Mammary epithelial cell (primary cell): ENCODE measurements at regions of chr19 and their contacts with region 1.

Region 1: GRCh38 chr19:13022859-13023636 is 27.8 kb downstream of the NFIX start:
- DNase-seq: peak; percentile 95
- H3K4me3 ChIP-seq: peak overlapping the region; percentile 57 to 65 (median 64)
- H3K27ac ChIP-seq: peak overlapping the region; percentile 90
- H3K4me1 ChIP-seq: peaks cover 74% of the 10 kb centered on the region
- H3K27me3 ChIP-seq: no peaks in the 10 kb centered on the region
- CTCF ChIP-seq: no peak

Region 2: GRCh38 chr19:12945479-12946091 is 77.5 kb before region 1 on chr19 and contains the start of gene RAD23A:
- CTCF ChIA-PET with region 1: no interaction called
- dilution Hi-C with region 1: no loop called
- in situ Hi-C with region 1: no loop called
- intact Hi-C with region 1: no loop called
- DNase-seq: peak; percentile 96
- H3K4me3 ChIP-seq: peak within 1 kb of the TSS; percentile 67 to 89 (median 85)
- H3K27ac ChIP-seq: peak within 1 kb of the TSS; percentile 90
- H3K4me1 ChIP-seq: peaks cover 27% of the 10 kb centered on the region
- H3K27me3 ChIP-seq: no peaks in the 10 kb centered on the region
- CTCF ChIP-seq: no peak
- total RNA-seq, gene RAD23A: 101 to 123 TPM

Region 3: DNA sequence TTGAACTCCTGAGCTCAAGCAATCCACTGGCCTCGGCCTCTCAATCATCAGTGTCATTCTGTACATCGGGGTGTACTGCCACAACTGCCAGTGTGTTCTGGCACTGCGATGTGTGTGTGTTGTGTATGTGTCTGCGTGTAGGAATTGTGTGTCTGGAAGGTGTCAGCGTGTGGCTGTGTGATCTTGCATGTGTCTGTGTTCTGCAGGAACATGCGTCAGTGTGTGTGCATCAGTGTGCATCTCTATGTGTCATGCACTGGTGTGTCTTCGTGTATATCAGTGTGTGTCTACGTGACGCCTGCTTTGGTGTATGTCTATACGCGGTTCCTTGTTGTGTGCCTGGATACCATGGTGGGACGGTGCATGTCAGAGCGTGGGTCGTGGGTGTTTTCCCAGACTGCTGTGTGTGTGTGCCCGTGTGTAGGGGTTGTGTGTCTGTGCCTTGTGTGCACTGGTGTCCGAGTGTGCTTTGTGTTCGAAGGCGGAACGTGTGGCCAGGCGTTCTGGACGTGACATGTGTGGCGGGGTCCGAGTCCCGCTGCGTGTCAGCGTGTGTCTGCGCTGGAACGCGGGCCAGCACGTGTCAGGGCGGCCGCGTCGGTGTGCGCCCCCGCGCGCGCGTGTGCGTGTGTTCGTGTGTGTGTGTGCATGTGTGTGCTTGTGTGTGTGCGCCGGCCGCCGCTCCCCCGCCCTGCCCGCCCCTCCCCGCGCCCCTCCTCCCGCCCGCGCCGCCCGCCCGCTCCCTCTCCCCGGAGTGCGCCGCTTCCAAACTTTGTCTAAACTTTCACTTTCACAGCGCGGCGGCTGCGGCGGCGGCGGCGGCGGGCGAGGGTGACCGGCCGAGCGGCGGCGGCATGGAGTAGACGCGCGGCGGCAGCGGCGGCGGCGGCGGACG is 28.1 kb before region 1 on chr19 and contains the start of gene NFIX:
- CTCF ChIA-PET with region 1: no interaction called
- dilution Hi-C with region 1: no loop called
- in situ Hi-C with region 1: loop called in 1 of 2 experiments (anchors 5 kb)
- intact Hi-C with region 1: loop called (anchors 2 kb)
- DNase-seq: peak; percentile 62
- H3K4me3 ChIP-seq: peak within 1 kb of the TSS; percentile 55 to 97 (median 91)
- H3K27ac ChIP-seq: peak within 1 kb of the TSS; percentile 47
- H3K4me1 ChIP-seq: peaks cover 19% of the 10 kb centered on the region
- H3K27me3 ChIP-seq: no peaks in the 10 kb centered on the region
- CTCF ChIP-seq: no peak
- total RNA-seq, gene NFIX: 43.2 to 76.1 TPM

Region 4: DNA sequence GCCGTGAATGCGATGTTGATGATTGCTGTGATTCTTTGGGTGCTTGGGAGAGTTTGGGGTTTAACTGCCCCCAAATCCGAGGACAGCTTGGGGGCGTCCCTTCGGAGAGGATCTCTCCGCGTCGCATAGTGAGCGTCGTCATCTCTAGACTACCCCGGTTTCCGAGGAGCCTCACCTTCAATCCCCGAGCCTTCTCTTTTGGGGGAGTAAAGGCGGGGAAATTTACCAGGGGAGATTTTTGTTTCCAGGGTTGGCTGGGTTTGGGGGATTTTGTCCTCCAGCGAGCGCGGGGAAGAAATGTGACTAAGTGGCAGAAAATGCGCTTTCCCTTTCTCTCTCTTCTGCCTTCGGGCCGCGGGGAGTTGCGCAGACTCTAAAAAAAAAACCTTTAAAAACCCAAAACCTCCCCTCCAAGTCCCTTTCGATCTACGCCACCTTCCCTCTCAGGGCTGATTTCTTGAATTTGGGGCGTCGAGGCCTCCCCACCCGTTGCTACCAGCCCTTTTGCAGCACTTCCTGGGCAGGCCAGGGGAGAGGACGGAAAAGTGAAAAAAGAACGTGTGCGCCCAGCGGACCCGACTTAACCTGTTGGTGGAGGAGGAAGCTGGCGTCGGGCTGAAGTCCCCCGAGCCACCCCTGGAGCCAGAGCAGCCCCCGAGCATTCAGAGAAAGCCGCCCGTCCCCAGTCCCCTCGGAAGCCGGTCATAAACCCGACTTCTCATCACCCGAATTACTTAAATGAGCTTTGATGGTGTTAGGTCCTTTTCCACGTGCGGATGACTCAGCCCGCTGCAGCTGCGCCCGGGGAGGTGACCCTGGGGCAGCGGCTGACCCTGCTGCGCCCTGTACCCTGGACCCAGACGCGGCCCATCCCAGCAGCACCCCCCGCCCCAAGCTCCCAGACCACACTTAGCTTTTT is 10.1 kb before region 1 on chr19:
- CTCF ChIA-PET with region 1: interaction called, 7 read pairs
- dilution Hi-C with region 1: no loop called
- in situ Hi-C with region 1: no loop called
- intact Hi-C with region 1: loop called (anchors 1 kb)
- DNase-seq: peak; percentile 71
- H3K4me3 ChIP-seq: peak overlapping the region; percentile 41 to 65 (median 51)
- H3K27ac ChIP-seq: peak overlapping the region; percentile 80
- H3K4me1 ChIP-seq: peaks cover 63% of the 10 kb centered on the region
- H3K27me3 ChIP-seq: no peaks in the 10 kb centered on the region
- CTCF ChIP-seq: no peak

Region 5: GRCh38 chr19:13055213-13056051 is 32.4 kb after region 1 on chr19:
- CTCF ChIA-PET with region 1: interaction called, 6 read pairs
- dilution Hi-C with region 1: loop called (anchors 5 kb)
- in situ Hi-C with region 1: no loop called
- intact Hi-C with region 1: loop called (anchors 5 kb)
- DNase-seq: peak; percentile 51
- H3K4me3 ChIP-seq: peak overlapping the region in 1 of 3 experiments; percentile 12
- H3K27ac ChIP-seq: peak overlapping the region; percentile 87
- H3K4me1 ChIP-seq: peaks cover 78% of the 10 kb centered on the region
- H3K27me3 ChIP-seq: no peaks in the 10 kb centered on the region
- CTCF ChIP-seq: peak in 1 of 2 donors; percentile 9

Region 6: DNA sequence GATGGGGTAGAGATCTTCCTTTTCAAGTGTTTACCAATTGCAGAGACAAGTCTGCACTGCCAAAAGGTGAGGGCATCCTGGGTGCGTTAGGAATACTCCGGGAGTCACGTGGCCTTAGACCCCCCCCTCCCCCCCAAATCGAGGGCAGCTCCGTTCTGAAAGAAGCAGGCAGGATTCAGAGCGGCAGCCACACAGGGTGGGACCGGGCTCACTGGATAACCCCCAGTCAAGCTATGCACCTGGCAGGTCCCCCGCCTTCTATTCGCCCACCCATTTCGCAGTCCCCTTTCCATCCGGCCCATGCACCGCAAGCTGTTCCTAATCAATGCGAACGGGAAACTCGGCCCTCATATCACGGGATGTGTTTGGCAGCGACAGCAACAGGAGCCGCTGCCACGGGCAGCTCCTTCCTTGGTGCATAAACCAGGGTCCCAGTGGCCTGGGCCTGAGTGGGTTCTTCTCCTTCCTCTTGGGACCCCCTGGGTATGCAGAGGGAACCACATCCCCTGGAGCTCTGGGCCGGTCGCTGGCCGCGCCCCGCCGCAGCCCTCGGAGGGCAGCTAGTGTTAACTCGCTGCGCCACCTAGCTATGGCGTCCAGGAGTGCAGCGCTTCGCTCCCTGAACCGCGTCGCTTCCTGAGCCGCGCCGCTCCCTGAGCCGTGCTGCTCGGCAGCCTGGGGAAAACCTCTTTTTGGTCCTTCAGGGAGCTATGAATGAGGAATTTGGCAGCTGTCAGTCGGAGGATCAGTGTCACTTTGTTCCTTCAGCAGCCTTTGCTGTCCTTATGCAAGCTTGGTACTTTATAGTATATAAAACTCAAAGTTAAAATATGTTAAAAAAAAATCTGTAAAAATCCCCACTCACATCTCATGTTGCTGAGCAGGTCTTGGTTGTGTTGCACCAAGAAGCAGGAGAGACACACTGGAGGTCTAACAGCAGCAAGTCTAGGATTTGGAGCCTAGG is 38.2 kb after region 1 on chr19:
- CTCF ChIA-PET with region 1: interaction called, 10 read pairs
- dilution Hi-C with region 1: loop called (anchors 5 kb)
- in situ Hi-C with region 1: no loop called
- intact Hi-C with region 1: loop called (anchors 5 kb)
- DNase-seq: peak; percentile 67
- H3K4me3 ChIP-seq: peak overlapping the region; percentile 20 to 23 (median 23)
- H3K27ac ChIP-seq: peak overlapping the region; percentile 77
- H3K4me1 ChIP-seq: peaks cover 35% of the 10 kb centered on the region
- H3K27me3 ChIP-seq: no peaks in the 10 kb centered on the region
- CTCF ChIP-seq: peak; percentile 84 to 97